Activated CD4-positive, alpha-beta T cell treated with anti-CD3 and anti-CD28 coated beads, Interleukin-2, amount 10 ng/mL, durations not matched to agents 24 days and 14 days (primary cell): ENCODE measurements at regions of chr11 and their contacts with region 1.

Region 1: DNA sequence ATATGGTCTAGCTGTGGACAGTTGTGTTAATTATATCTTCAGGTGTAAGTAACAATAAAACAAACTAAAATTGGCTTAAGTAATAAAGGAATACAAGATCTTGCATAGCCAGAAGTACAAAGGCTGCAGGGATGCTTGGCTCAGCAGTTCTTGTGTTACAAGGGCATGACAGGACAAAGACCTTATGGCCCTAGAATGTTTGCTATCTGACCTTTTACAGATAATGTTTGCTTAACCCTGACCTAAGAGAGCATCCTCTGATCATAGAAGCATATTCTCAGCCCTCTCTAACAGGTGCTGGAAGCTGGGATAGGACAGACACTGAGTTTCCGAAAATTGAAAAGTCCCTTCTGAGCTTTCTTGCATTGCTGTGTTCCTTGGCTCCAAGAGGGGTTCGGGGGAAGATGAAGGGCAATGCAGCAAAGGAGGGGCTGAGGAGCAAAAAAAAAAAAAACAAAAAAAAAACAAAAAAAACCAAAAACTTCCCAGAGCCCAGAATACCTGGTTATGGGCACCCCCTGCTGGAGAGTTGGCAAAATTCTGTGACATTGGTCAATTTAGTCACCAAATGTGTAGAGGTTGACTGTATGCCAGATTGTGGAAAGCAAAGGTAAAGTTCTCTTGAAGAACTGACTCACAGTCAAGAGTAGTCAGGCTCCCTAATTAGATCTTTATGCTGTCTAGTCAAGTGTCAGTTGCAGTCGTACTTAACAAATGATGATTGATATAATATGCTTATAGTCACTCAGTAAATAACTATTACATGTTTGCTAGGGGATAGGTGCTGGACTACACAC is 10.4 kb upstream of the HIKESHI start:
- DNase-seq: peak; percentile 86
- H3K4me3 Mint-ChIP-seq: peak overlapping the region; percentile 21
- H3K27ac Mint-ChIP-seq: peak overlapping the region; percentile 70
- H3K4me1 Mint-ChIP-seq: peaks cover 48% of the 10 kb centered on the region
- H3K27me3 Mint-ChIP-seq: peaks cover 1% of the 10 kb centered on the region

Region 2: GRCh38 chr11:85752890-85753581 is 538.6 kb before region 1 on chr11:
- intact Hi-C with region 1: loop called (anchors 2 kb)
- DNase-seq: peak; percentile 97
- H3K4me3 Mint-ChIP-seq: peak overlapping the region; percentile 78
- H3K27ac Mint-ChIP-seq: peak overlapping the region; percentile 97
- H3K4me1 Mint-ChIP-seq: peaks cover 88% of the 10 kb centered on the region
- H3K27me3 Mint-ChIP-seq: peaks cover 2% of the 10 kb centered on the region

Region 3: GRCh38 chr11:86041975-86042378 is 249.7 kb before region 1 on chr11:
- intact Hi-C with region 1: loop called (anchors 1 kb)
- DNase-seq: peak; percentile 88
- H3K4me3 Mint-ChIP-seq: peak overlapping the region; percentile 45
- H3K27ac Mint-ChIP-seq: peak overlapping the region; percentile 73
- H3K4me1 Mint-ChIP-seq: peaks cover 57% of the 10 kb centered on the region
- H3K27me3 Mint-ChIP-seq: no peaks in the 10 kb centered on the region

Region 4: GRCh38 chr11:86138958-86139357 is 152.7 kb before region 1 on chr11:
- intact Hi-C with region 1: loop called (anchors 5 kb)
- DNase-seq: peak; percentile 79
- H3K4me3 Mint-ChIP-seq: peak overlapping the region; percentile 72
- H3K27ac Mint-ChIP-seq: peak overlapping the region; percentile 85
- H3K4me1 Mint-ChIP-seq: peaks cover 58% of the 10 kb centered on the region
- H3K27me3 Mint-ChIP-seq: no peaks in the 10 kb centered on the region

Region 5: DNA sequence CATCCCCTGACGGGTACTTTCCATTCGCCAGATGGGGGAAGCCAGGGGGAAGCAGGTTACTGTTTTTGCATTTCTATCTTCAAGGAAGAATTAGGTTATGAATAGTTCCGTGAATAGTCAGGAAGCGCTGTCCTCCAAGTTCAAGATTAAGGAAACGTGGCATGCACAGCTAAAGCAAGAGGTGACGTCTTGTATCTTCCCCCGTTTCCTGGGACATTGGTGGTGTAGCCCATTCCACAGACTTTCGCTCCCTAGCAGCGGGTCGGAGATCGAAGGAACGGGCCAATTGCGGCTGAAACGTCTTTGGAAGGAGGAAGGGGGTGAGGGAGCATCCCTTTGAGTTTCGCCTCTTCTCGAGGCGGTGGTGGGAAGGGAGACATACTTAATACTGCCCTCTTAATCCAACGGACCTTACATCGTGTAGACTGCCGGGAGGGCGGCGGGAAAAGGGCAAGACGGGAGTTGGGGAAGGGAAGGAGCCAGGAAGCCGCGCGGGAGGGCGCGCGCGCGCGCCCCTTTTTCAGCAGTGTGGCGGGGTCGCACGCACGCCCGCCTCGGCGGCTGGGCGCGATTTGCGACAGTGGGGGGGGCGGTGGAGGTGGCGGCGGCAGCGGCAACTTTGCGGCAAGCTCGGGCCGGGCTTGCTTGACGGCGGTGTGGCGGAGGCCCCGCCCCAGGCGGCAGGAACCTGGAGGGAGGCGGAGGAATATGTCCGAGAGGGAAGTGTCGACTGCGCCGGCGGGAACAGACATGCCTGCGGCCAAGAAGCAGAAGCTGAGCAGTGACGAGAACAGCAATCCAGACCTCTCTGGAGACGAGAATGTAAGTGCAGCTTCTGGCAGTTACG is 46.9 kb before region 1 on chr11 and contains the start of gene EED:
- intact Hi-C with region 1: loop called (anchors 1 kb)
- DNase-seq: peak; percentile 98
- H3K4me3 Mint-ChIP-seq: no peak within 1 kb of the TSS
- H3K27ac Mint-ChIP-seq: no peak within 1 kb of the TSS
- H3K4me1 Mint-ChIP-seq: peaks cover 34% of the 10 kb centered on the region
- H3K27me3 Mint-ChIP-seq: no peaks in the 10 kb centered on the region
- total RNA-seq, gene EED: 269 TPM in 2 replicates

Region 6: GRCh38 chr11:86274503-86274902 is 17.2 kb before region 1 on chr11:
- intact Hi-C with region 1: no loop called
- DNase-seq: peak; percentile 54
- H3K4me3 Mint-ChIP-seq: no peak overlapping the region
- H3K27ac Mint-ChIP-seq: peak overlapping the region; percentile 27
- H3K4me1 Mint-ChIP-seq: peaks cover 39% of the 10 kb centered on the region
- H3K27me3 Mint-ChIP-seq: no peaks in the 10 kb centered on the region

Region 7: DNA sequence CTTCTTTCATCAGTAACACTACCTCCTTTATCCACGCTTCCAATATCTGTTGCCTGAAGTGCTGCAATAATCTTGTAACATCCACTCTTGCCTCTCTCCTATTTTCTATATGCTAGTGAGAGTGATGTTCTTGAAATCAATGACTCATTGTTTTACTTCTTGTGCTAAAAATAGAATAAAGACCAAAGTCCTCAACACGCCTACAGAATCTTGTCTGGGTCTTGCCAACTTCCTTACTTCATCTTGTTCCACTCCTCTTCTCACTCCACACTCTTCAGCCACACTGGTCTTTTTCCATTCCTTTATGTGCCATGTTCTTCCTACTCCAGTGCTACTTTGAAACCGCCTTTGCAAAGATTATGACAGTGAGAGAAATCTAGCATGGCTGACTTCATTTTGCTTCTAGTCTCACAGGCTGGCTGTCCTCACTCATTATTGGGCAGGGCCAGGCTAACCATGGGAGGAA is 219.5 kb after region 1 on chr11:
- intact Hi-C with region 1: loop called (anchors 1 kb)
- DNase-seq: no peak
- H3K4me3 Mint-ChIP-seq: no peak overlapping the region
- H3K27ac Mint-ChIP-seq: no peak overlapping the region
- H3K4me1 Mint-ChIP-seq: no peaks in the 10 kb centered on the region
- H3K27me3 Mint-ChIP-seq: peaks cover under 1% of the 10 kb centered on the region